ENCODE measurements at regions of chr19 and their contacts with region 1.

Region 1: DNA sequence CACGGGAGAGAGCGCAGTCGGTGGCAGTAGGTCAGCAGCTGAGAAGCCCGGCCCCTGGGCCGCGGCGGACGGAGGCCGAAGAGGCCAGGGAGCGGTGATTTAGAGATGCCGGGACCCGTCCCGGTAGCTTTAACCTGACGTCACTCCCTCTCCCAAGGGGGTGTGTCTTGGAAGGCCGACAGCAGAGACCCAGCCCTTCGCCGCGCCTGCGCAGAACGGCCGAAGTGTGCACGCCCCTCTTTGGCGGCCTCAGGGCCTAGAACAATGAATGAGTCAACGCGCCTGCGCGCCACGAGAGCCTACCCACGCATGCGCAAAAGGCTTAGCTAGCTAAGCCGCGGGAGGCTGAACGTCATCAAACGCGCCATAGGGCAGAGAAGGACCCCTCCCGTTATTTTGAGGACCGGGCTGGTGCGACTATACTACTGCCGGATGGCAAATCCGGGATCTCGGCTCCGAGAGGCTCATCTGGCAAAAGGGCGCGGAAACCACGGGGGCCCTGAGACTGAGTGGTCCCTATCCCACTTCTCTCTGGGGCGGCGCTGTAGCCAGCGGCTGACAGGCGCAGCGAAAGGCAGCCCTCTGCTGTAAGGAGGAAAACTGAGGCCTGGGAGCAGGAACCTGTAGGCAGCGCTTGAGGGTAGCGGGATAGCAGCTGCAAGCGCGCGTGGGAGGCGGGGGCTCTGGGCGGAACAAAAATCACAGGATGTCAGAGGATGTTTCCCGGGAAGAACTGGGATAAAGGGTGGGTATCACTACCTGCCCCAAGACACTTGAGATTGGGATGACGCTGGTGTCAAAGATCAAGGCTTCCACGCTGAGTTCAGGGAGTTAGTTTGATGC is at the starts of genes IRGQ and ZNF576:
- DNase-seq: peak; percentile 96 to 100
- H3K4me3 ChIP-seq: peak within 1 kb of the TSS; percentile 94
- H3K27ac ChIP-seq: peak within 1 kb of the TSS; percentile 83
- H3K4me1 ChIP-seq: peaks cover 15% of the 10 kb centered on the region
- H3K27me3 ChIP-seq: no peaks in the 10 kb centered on the region
- CTCF ChIP-seq: no peak
- total RNA-seq, gene IRGQ: 23.3 and 31.6 TPM in 2 replicates
- total RNA-seq, gene ZNF576: 15.5 and 16.9 TPM in 2 replicates

Region 2: DNA sequence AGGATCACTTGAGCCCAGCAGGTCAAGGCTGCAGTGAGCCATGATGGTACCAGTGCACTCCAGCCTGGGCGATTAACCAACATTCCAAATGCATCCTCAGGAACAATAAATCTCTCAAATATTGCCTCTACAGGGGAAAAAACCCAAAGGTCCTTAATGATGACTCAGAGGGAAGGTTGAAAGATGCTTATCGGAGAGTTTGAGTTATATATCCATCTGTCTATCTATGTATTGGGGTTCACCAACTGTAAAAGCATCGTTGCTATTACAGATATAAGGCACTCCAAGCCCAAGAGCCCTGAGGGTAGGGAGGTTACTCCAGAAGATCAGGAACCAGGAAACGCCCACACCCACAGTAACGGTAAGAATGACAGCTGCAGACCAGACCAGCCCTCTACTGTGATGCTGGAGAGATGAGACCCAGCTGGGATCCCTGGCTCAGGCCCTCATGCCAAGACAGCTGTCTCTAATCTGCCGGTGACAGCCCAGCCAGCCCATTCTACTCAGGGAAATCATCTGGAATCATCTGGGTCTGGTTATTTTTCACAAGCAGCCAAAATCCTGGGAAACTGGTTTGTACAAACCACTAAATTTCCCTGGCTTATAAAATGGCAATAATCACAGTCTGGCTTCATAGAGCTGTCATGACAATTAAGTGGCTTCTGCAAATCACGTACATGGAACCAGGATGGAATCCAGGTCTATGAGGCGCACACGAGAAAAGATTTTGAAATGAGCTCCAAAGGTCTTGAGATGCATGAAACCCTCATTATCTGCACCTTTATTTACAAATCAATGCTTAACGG is 157.7 kb before region 1 on chr19:
- CTCF ChIA-PET with region 1: no interaction called
- POLR2A ChIA-PET with region 1: no interaction called
- intact Hi-C with region 1: loop called (anchors 10 kb)
- DNase-seq: peak; percentile 59 to 82
- H3K4me3 ChIP-seq: peak overlapping the region; percentile 31; the same call in 1 of the 2 replicates
- H3K27ac ChIP-seq: peak overlapping the region; percentile 93
- H3K4me1 ChIP-seq: peaks cover 31% of the 10 kb centered on the region
- H3K27me3 ChIP-seq: no peaks in the 10 kb centered on the region
- CTCF ChIP-seq: no peak

Region 3: GRCh38 chr19:43575156-43575950 is 20.9 kb before region 1 on chr19 and contains the starts of genes PINLYP and XRCC1:
- CTCF ChIA-PET with region 1: interaction called, 4 read pairs
- POLR2A ChIA-PET with region 1: interaction called, 6 read pairs
- intact Hi-C with region 1: loop called (anchors 1 kb)
- DNase-seq: peak; percentile 92 to 95
- H3K4me3 ChIP-seq: peak within 1 kb of the TSS; percentile 94
- H3K27ac ChIP-seq: no peak within 1 kb of the TSS
- H3K4me1 ChIP-seq: peaks cover 10% of the 10 kb centered on the region; the same call in 1 of the 2 replicates
- H3K27me3 ChIP-seq: no peaks in the 10 kb centered on the region
- CTCF ChIP-seq: no peak
- total RNA-seq, gene PINLYP: 0.53 and 2.0 TPM in 2 replicates
- total RNA-seq, gene XRCC1: 37.2 and 45.1 TPM in 2 replicates

Region 4: DNA sequence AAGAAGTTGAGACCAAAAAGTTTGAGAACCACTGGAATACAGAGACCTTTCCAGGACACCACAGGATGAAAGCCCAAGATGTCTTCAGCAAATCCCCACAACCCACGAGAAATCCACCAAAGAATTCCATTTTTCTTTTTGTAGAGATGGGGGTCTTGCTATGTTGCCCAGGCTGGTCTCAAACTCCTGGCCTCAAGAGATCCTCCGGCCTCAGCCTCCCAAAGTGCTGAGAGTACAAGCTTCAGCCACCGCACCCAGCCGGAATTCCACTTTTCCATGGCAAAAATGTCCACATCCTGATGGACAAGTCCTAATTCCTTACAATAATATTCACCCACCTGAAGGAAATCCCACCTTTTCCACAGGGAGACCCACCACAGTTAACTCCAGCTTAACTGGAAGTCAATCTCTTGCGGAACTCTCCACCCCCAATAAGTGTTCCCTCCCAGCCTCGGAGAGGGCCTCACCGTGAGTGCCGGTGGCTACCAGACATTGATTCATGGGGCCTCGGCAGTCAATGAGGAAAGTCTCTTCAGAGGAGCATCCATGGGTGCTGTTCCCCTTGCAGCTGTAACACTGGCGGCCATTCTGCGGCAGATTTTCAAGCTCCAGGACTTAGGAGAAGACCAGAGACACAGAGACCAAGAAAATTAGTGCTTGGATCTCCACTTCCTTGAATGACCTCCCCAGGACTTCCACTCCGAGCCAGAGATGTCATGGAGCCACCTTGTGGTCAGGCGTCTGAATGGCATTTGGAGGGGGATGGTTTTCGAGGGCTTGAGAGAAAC is 55.7 kb after region 1 on chr19:
- CTCF ChIA-PET with region 1: interaction called, 4 read pairs
- POLR2A ChIA-PET with region 1: no interaction called
- intact Hi-C with region 1: loop called (anchors 1 kb)
- DNase-seq: peak; percentile 49 to 61
- H3K4me3 ChIP-seq: no peak overlapping the region
- H3K27ac ChIP-seq: no peak overlapping the region
- H3K4me1 ChIP-seq: no peaks in the 10 kb centered on the region
- H3K27me3 ChIP-seq: no peaks in the 10 kb centered on the region
- CTCF ChIP-seq: peak; percentile 81

Region 5: DNA sequence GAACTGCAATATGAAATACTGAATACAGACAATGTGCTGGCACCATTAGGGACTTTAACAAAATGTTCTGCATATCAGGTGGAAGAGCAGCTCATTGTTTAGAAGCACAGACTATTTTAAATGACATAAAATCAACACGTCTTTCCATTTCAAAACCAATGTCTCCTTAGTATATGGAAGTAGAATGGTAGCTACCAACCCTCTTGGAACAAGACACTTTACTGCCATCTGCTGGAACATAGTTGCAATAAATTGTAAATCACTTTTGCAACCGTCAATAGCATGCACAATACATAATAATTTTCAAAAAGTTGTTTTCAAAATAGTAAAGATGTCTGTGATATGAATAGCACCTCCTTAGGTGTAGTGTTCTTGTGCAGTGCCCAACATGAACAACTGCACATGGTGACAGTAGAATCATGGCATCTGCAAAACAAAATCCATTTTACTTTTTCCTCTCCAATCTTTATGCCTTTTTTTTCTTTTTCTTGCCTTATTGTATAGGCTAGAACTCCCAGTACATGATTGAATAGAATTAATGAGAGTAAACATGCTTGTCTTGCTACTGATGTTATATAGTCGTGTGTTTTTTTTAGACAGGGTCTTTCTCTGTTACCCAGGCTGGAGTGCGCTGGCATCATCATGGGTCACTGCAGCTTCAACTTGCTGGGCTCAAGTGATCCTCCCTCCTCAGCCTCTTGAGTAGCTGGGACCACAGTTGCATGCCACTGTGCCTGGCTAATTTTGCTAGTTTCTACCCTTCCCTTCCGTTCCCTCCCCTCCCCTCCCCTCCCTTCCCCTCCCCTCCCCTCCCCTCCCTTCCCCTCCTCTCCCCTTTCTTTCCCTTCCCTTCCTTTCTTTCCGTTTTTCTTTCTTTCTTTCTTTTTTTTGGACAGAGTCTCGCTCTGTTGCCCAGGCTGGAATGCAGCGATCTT is 213.8 kb after region 1 on chr19:
- CTCF ChIA-PET with region 1: interaction called, 3 read pairs
- POLR2A ChIA-PET with region 1: no interaction called
- intact Hi-C with region 1: loop called (anchors 1 kb)
- DNase-seq: peak in 1 of 2 experiments; percentile 66
- H3K4me3 ChIP-seq: no peak overlapping the region
- H3K27ac ChIP-seq: no peak overlapping the region
- H3K4me1 ChIP-seq: peaks cover 7% of the 10 kb centered on the region
- H3K27me3 ChIP-seq: no peaks in the 10 kb centered on the region
- CTCF ChIP-seq: peak; percentile 77

Measured in PC-9 (cell line).